CD8-positive, alpha-beta memory T cell (primary cell): ENCODE measurements at regions of chr19 and their contacts with region 1.

Region 1: GRCh38 chr19:19404879-19405860 is at the start of gene GATAD2A:
- DNase-seq: peak; percentile 88 to 95 (median 91)
- H3K4me3 ChIP-seq: peak within 1 kb of the TSS; percentile 85
- H3K4me3 Mint-ChIP-seq: peak within 1 kb of the TSS; percentile 87 to 97 (median 91)
- H3K27ac ChIP-seq: peak within 1 kb of the TSS; percentile 75
- H3K27ac Mint-ChIP-seq: peak within 1 kb of the TSS; percentile 87 to 99 (median 94)
- H3K4me1 ChIP-seq: peaks cover 46% of the 10 kb centered on the region
- H3K4me1 Mint-ChIP-seq: peaks cover 53 to 72% (median 61%) of the 10 kb centered on the region in 3 donors
- H3K27me3 ChIP-seq: no peaks in the 10 kb centered on the region
- H3K27me3 Mint-ChIP-seq: peaks cover 0 to 1% of the 10 kb centered on the region in 2 donors
- total RNA-seq, gene GATAD2A: 176 to 182 TPM

Region 2: GRCh38 chr19:19063183-19064097 is 341.7 kb before region 1 on chr19 and contains the start of gene SLC25A42:
- CTCF ChIA-PET with region 1: no interaction called
- POLR2A ChIA-PET with region 1: no interaction called
- DNase-seq: peak; percentile 99 to 100 (median 100)
- H3K4me3 ChIP-seq: peak within 1 kb of the TSS; percentile 87
- H3K4me3 Mint-ChIP-seq: peak within 1 kb of the TSS; percentile 84 to 97 (median 92)
- H3K27ac ChIP-seq: peak within 1 kb of the TSS; percentile 74
- H3K27ac Mint-ChIP-seq: peak within 1 kb of the TSS; percentile 53 to 98 (median 88)
- H3K4me1 ChIP-seq: peaks cover 23% of the 10 kb centered on the region
- H3K4me1 Mint-ChIP-seq: peaks cover 29 to 46% (median 40%) of the 10 kb centered on the region in 3 donors
- H3K27me3 ChIP-seq: no peaks in the 10 kb centered on the region
- H3K27me3 Mint-ChIP-seq: no peaks in the 10 kb centered on the region
- total RNA-seq, gene SLC25A42: 10.4 to 11.3 TPM

Region 3: GRCh38 chr19:19259741-19260140 is 145.4 kb before region 1 on chr19:
- CTCF ChIA-PET with region 1: no interaction called
- POLR2A ChIA-PET with region 1: no interaction called
- DNase-seq: no peak
- H3K4me3 ChIP-seq: no peak overlapping the region
- H3K4me3 Mint-ChIP-seq: no peak overlapping the region
- H3K27ac ChIP-seq: no peak overlapping the region
- H3K27ac Mint-ChIP-seq: no peak overlapping the region
- H3K4me1 ChIP-seq: no peaks in the 10 kb centered on the region
- H3K4me1 Mint-ChIP-seq: peaks cover 0 to 14% (median 9%) of the 10 kb centered on the region in 3 donors
- H3K27me3 ChIP-seq: peaks cover 11% of the 10 kb centered on the region
- H3K27me3 Mint-ChIP-seq: peaks cover 30 to 68% of the 10 kb centered on the region in 2 donors

Region 4: DNA sequence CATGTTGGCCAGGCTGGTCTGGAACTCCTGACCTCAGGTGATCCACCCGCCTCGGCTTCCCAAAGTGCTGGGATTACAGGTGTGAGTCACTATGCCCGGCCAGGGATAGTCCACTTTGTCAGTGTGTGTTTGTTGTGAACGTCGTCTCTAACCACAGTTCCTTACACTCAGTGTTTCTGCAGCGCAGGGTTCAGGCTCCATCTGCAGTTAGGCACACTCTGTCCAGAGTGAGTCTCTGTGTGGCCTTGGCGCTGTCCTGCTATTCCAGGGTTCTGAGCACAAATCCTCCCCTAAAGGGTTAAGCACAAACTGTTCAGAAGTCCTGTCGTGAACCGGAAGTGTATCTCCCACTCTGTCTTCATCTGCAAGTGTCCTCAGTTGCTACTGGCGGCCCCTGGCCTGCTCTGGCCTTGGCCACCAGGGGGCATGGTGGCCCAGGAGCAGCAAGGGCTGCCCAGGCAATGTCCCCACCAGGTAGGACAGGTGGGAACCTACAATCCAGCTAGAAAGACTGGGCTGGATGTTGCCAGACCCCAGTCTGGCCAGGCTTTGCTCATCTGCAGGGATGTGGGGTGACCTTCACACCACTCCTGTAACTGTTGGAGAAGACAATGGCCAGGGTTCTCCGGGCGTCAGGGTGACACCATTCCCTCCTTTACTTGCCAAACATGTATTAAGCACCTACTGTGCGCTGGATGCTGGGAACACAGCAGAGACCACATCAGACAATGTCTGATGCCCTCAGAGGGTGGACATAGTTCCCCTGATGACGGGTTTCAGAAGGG is 38.4 kb before region 1 on chr19:
- CTCF ChIA-PET with region 1: interaction called, 46 read pairs
- POLR2A ChIA-PET with region 1: interaction called, 21 read pairs
- DNase-seq: peak; percentile 48 to 79 (median 61)
- H3K4me3 ChIP-seq: no peak overlapping the region
- H3K4me3 Mint-ChIP-seq: peak overlapping the region; percentile 37 to 74 (median 52)
- H3K27ac ChIP-seq: no peak overlapping the region
- H3K27ac Mint-ChIP-seq: peak overlapping the region in 7 of 8 donors; percentile 15 to 91 (median 85)
- H3K4me1 ChIP-seq: peaks cover 26% of the 10 kb centered on the region
- H3K4me1 Mint-ChIP-seq: peaks cover 13 to 20% (median 19%) of the 10 kb centered on the region in 3 donors
- H3K27me3 ChIP-seq: no peaks in the 10 kb centered on the region
- H3K27me3 Mint-ChIP-seq: no peaks in the 10 kb centered on the region

Region 5: GRCh38 chr19:19372656-19373416 is 32.3 kb before region 1 on chr19:
- CTCF ChIA-PET with region 1: interaction called, 46 read pairs
- POLR2A ChIA-PET with region 1: interaction called, 10 read pairs
- DNase-seq: peak in 3 of 5 donors; percentile 27 to 64 (median 32)
- H3K4me3 ChIP-seq: peak overlapping the region; percentile 40
- H3K4me3 Mint-ChIP-seq: peak overlapping the region in 6 of 7 donors; percentile 12 to 68 (median 53)
- H3K27ac ChIP-seq: peak overlapping the region; percentile 64
- H3K27ac Mint-ChIP-seq: peak overlapping the region; percentile 61 to 95 (median 86)
- H3K4me1 ChIP-seq: peaks cover 13% of the 10 kb centered on the region
- H3K4me1 Mint-ChIP-seq: peaks cover 9% of the 10 kb centered on the region in 3 donors
- H3K27me3 ChIP-seq: no peaks in the 10 kb centered on the region
- H3K27me3 Mint-ChIP-seq: no peaks in the 10 kb centered on the region

Region 6: DNA sequence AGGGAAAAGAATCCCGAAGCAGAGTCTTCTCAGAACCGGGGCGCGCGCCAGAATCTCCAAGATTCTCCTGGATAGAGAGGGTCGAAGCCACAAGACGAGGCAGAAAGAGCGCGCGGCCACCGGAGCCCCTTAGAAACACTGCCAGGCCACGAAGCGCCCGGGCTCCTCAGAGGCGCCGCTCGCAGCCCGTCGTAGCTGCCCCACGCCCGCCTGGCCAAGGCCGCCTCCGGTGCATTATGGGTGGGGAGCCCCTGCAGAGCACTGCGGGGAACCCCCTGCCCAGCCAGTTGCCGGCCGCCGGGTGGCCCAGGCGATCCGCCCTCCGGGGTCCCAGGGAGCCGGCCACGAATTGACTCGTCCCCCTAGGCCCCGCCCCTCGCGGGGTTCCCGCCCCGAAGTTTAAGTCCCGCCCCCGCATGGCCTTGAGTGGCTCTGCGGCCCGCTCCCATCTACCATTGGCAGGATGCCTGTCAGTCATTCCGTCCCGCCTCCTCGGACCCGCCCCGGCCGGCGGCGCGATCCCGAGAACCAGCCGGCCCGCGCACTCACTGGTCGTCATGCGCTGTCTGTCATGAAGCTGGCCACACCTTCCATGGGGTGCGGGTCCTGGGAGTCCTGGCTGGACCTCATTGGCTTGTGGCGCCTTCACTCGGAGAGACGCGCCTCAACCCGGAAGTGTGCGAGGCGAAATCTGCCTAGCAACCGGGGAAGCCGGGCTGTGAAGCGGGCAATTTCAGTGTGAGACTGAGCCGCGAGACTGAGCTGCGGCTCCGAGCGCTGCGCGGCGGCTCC is 19.9 kb before region 1 on chr19:
- CTCF ChIA-PET with region 1: interaction called, 17 read pairs
- POLR2A ChIA-PET with region 1: interaction called, 32 read pairs
- DNase-seq: peak in 4 of 5 donors; percentile 98 to 100 (median 99)
- H3K4me3 ChIP-seq: peak overlapping the region; percentile 74
- H3K4me3 Mint-ChIP-seq: peak overlapping the region; percentile 86 to 96 (median 92)
- H3K27ac ChIP-seq: peak overlapping the region; percentile 90
- H3K27ac Mint-ChIP-seq: peak overlapping the region; percentile 84 to 96 (median 92)
- H3K4me1 ChIP-seq: peaks cover 47% of the 10 kb centered on the region
- H3K4me1 Mint-ChIP-seq: peaks cover 39 to 40% (median 40%) of the 10 kb centered on the region in 3 donors
- H3K27me3 ChIP-seq: no peaks in the 10 kb centered on the region
- H3K27me3 Mint-ChIP-seq: no peaks in the 10 kb centered on the region

Region 7: DNA sequence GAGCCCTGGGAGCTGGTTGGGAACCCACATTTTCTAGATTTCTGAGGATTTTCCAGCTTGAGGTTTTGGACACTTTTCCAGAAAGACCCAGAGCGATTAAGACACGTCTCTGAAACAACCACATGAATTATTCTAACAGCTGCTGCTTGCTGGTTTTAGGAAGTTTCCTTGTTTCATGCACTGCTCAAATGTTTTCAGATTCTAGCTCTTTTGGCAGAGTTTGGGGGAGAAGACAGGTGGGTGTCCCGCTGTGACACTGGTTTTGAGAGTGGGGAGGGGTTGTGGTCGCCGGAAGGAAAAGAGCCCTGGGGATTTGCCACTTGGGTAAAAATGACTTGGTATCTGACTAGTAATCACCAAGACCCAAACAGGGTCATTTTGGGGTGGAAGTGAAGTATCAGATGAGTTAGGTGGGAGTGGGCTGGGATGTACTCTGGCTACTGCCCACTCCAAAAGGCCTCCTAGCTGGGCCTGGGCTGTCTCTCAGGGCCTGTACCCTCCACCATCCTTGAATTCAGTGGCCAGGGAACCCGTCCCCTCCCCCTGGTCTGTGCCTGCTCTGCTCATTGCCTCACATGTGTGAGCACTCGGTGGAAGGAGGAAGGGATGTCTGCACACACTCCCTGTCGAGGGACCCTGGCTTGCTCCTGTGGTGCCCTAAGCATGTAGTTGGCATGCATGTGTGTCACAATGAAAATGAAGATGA is 13.5 kb after region 1 on chr19:
- CTCF ChIA-PET with region 1: interaction called, 13 read pairs
- POLR2A ChIA-PET with region 1: interaction called, 4 read pairs
- DNase-seq: no peak
- H3K4me3 ChIP-seq: no peak overlapping the region
- H3K4me3 Mint-ChIP-seq: peak overlapping the region; percentile 7 to 69 (median 60)
- H3K27ac ChIP-seq: no peak overlapping the region
- H3K27ac Mint-ChIP-seq: peak overlapping the region; percentile 79 to 98 (median 86)
- H3K4me1 ChIP-seq: peaks cover 63% of the 10 kb centered on the region
- H3K4me1 Mint-ChIP-seq: peaks cover 72 to 82% (median 75%) of the 10 kb centered on the region in 3 donors
- H3K27me3 ChIP-seq: no peaks in the 10 kb centered on the region
- H3K27me3 Mint-ChIP-seq: no peaks in the 10 kb centered on the region

Region 8: GRCh38 chr19:19459707-19460251 is 54.6 kb after region 1 on chr19:
- CTCF ChIA-PET with region 1: interaction called, 7 read pairs
- POLR2A ChIA-PET with region 1: interaction called, 17 read pairs
- DNase-seq: peak; percentile 55 to 83 (median 67)
- H3K4me3 ChIP-seq: peak overlapping the region; percentile 52
- H3K4me3 Mint-ChIP-seq: peak overlapping the region; percentile 85 to 93 (median 89)
- H3K27ac ChIP-seq: peak overlapping the region; percentile 82
- H3K27ac Mint-ChIP-seq: peak overlapping the region; percentile 97 to 100 (median 99)
- H3K4me1 ChIP-seq: peaks cover 90% of the 10 kb centered on the region
- H3K4me1 Mint-ChIP-seq: peaks cover 75 to 92% (median 77%) of the 10 kb centered on the region in 3 donors
- H3K27me3 ChIP-seq: no peaks in the 10 kb centered on the region
- H3K27me3 Mint-ChIP-seq: no peaks in the 10 kb centered on the region